Activated CD4-positive, alpha-beta T cell treated with anti-CD3 and anti-CD28 coated beads for 36 hours (primary cell): ENCODE measurements at regions of chr9 and their contacts with region 1.

Region 1: DNA sequence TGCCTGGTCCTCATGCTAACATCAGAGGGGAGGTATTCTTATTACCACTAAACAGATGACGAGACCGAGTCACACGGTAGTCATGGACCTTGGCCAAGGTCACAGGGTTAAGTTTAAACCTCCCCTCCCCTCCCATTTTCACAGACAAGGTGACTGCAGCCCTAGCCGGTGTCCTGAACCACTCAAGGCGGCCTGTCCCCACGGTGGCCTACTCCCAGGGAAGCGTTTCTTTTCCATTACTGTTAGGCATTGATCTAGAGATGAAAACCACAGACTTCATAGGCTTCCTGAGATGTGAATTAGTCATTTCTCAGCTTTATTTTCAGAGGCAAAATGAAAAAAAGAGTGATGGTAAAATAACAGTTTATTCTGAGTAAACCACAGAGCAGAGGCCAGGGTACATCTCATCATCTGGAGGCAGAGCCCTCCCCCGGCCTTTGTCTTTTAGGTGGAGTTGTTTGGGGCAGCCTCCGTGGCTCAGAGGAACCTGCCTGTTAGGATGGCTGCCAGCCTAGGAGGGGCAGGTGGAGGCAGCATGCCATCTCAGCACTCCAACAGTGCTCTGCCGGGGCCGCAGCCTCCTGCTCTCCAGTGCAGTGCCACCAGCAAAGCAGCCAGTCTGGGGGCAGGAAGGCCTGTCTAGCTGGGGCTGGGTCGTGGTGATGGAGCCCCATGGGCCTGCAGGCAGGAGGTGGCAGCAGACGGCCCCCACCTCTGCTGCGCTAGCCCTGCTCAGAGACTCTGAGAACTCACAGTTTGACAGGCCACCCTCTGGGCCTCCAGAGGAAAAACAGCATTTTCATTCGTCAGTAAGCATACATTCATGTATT is 71.2 kb downstream of the RAPGEF1 start:
- DNase-seq: peak; percentile 83
- ATAC-seq: peak; percentile 68
- H3K4me3 Mint-ChIP-seq: peak overlapping the region; percentile 54
- H3K27ac Mint-ChIP-seq: peak overlapping the region; percentile 96
- H3K4me1 Mint-ChIP-seq: peaks cover 93% of the 10 kb centered on the region
- H3K27me3 Mint-ChIP-seq: no peaks in the 10 kb centered on the region

Region 2: GRCh38 chr9:131277910-131278701 is 390.5 kb before region 1 on chr9:
- CTCF ChIA-PET with region 1: no interaction called
- POLR2A ChIA-PET with region 1: no interaction called
- intact Hi-C with region 1: loop called in 1 of 2 experiments (anchors 5 kb)
- DNase-seq: peak; percentile 88
- ATAC-seq: peak; percentile 55
- H3K4me3 Mint-ChIP-seq: peak overlapping the region; percentile 75
- H3K27ac Mint-ChIP-seq: peak overlapping the region; percentile 71
- H3K4me1 Mint-ChIP-seq: peaks cover 22% of the 10 kb centered on the region
- H3K27me3 Mint-ChIP-seq: peaks cover 7% of the 10 kb centered on the region

Region 3: GRCh38 chr9:131635285-131635684 is 33.4 kb before region 1 on chr9:
- CTCF ChIA-PET with region 1: interaction called, 3 read pairs
- POLR2A ChIA-PET with region 1: no interaction called
- intact Hi-C with region 1: loop called (anchors 1 to 2 kb)
- DNase-seq: peak; percentile 87
- ATAC-seq: peak; percentile 99
- H3K4me3 Mint-ChIP-seq: no peak overlapping the region
- H3K27ac Mint-ChIP-seq: peak overlapping the region; percentile 89
- H3K4me1 Mint-ChIP-seq: peaks cover 35% of the 10 kb centered on the region
- H3K27me3 Mint-ChIP-seq: no peaks in the 10 kb centered on the region

Region 4: DNA sequence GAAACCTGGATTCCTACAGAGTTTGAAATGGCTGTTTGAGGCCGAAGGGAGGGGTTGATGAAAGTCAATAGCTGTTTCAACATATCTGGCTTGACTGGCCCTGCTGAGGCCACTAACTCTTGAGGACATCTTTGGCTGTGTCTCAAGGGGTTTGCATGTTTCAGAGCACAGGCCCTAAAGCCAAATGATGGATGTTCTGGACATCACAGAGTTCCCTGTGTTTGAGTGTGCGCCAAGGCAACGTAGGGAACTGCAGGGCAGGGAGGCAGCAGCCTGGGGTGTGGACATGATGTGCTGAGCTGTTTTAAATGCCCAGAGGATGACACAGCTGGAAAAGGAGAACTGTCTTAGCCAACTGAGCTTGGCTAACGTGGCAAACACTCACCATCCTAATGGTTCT is 18.4 kb before region 1 on chr9:
- CTCF ChIA-PET with region 1: no interaction called
- POLR2A ChIA-PET with region 1: no interaction called
- intact Hi-C with region 1: loop called (anchors 1 to 2 kb)
- DNase-seq: no peak
- ATAC-seq: no peak
- H3K4me3 Mint-ChIP-seq: no peak overlapping the region
- H3K27ac Mint-ChIP-seq: no peak overlapping the region
- H3K4me1 Mint-ChIP-seq: peaks cover 59% of the 10 kb centered on the region
- H3K27me3 Mint-ChIP-seq: no peaks in the 10 kb centered on the region

Region 5: GRCh38 chr9:131709771-131710454 is 41.3 kb after region 1 on chr9:
- CTCF ChIA-PET with region 1: interaction called, 3 read pairs
- POLR2A ChIA-PET with region 1: interaction called, 7 read pairs
- intact Hi-C with region 1: loop called in 1 of 2 experiments (anchors 1 kb)
- DNase-seq: peak; percentile 66
- ATAC-seq: peak; percentile 88
- H3K4me3 Mint-ChIP-seq: peak overlapping the region; percentile 53
- H3K27ac Mint-ChIP-seq: peak overlapping the region; percentile 90
- H3K4me1 Mint-ChIP-seq: peaks cover 87% of the 10 kb centered on the region
- H3K27me3 Mint-ChIP-seq: no peaks in the 10 kb centered on the region